Common myeloid progenitor, CD34-positive (primary cell): ENCODE measurements at regions of chr17 and their contacts with region 1.

Region 1: DNA sequence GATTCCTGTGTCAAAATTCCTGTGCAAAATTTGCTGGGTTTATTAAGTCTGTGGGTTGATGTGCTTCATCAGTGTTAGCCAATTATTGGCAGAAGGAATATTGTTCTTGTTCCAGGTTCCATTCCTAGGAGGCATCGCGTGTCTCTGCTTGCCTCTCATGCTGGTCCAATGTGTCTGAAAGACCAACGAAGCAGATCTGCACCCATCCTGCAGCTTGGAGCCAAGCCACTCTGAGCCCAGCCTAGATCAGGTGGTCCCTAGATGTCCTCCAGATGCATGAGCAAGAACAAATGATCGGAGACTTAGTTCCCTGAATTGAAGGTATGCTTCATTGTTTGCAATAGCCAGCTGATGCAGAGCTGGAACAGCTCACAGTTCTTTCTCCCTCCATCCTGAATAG is 10.5 kb upstream of the PIK3R6 start:
- DNase-seq: no peak
- H3K4me3 ChIP-seq: no peak overlapping the region
- H3K27ac ChIP-seq: no peak overlapping the region
- H3K4me1 ChIP-seq: peaks cover 0 to 25% (median 17%) of the 10 kb centered on the region in 4 experiments
- H3K27me3 ChIP-seq: no peaks in the 10 kb centered on the region

Region 2: GRCh38 chr17:8887834-8888703 is 10.1 kb after region 1 on chr17:
- CTCF ChIA-PET with region 1: interaction called, 11 read pairs
- POLR2A ChIA-PET with region 1: no interaction called
- DNase-seq: no peak
- H3K4me3 ChIP-seq: no peak overlapping the region
- H3K27ac ChIP-seq: no peak overlapping the region
- H3K4me1 ChIP-seq: no peaks in the 10 kb centered on the region
- H3K27me3 ChIP-seq: no peaks in the 10 kb centered on the region